ENCODE measurements at regions of chr11 and their contacts with region 1.

Region 1: GRCh38 chr11:102614485-102614884 is 10.6 kb downstream of the MMP20 start:
- DNase-seq: no peak
- ATAC-seq: no peak
- H3K4me3 ChIP-seq: no peak overlapping the region
- H3K4me3 Mint-ChIP-seq: no peak overlapping the region
- H3K27ac ChIP-seq: no peak overlapping the region
- H3K27ac Mint-ChIP-seq: no peak overlapping the region
- H3K4me1 ChIP-seq: peaks cover 3% of the 10 kb centered on the region
- H3K4me1 Mint-ChIP-seq: no peaks in the 10 kb centered on the region
- H3K27me3 ChIP-seq: no peaks in the 10 kb centered on the region
- H3K27me3 Mint-ChIP-seq: peaks cover 4% of the 10 kb centered on the region
- CTCF ChIP-seq: no peak

Region 2: GRCh38 chr11:102367364-102367763 is 247.1 kb before region 1 on chr11:
- CTCF ChIA-PET with region 1: no interaction called
- POLR2A ChIA-PET with region 1: no interaction called
- intact Hi-C with region 1: loop called in 1 of 2 experiments (anchors 5 kb)
- DNase-seq: peak in 3 of 14 experiments; percentile 56 to 64 (median 60)
- ATAC-seq: peak; percentile 78
- H3K4me3 ChIP-seq: no peak overlapping the region
- H3K4me3 Mint-ChIP-seq: no peak overlapping the region
- H3K27ac ChIP-seq: no peak overlapping the region
- H3K27ac Mint-ChIP-seq: peak overlapping the region; percentile 75
- H3K4me1 ChIP-seq: no peaks in the 10 kb centered on the region
- H3K4me1 Mint-ChIP-seq: peaks cover 34% of the 10 kb centered on the region
- H3K27me3 ChIP-seq: no peaks in the 10 kb centered on the region
- H3K27me3 Mint-ChIP-seq: no peaks in the 10 kb centered on the region
- CTCF ChIP-seq: peak; percentile 59

Region 3: GRCh38 chr11:102589047-102589459 is 25.4 kb before region 1 on chr11:
- CTCF ChIA-PET with region 1: no interaction called
- POLR2A ChIA-PET with region 1: no interaction called
- intact Hi-C with region 1: loop called in 1 of 2 experiments (anchors 1 kb)
- DNase-seq: no peak
- ATAC-seq: no peak
- H3K4me3 ChIP-seq: no peak overlapping the region
- H3K4me3 Mint-ChIP-seq: no peak overlapping the region
- H3K27ac ChIP-seq: no peak overlapping the region
- H3K27ac Mint-ChIP-seq: no peak overlapping the region
- H3K4me1 ChIP-seq: no peaks in the 10 kb centered on the region
- H3K4me1 Mint-ChIP-seq: no peaks in the 10 kb centered on the region
- H3K27me3 ChIP-seq: no peaks in the 10 kb centered on the region
- H3K27me3 Mint-ChIP-seq: no peaks in the 10 kb centered on the region
- CTCF ChIP-seq: no peak